Activated CD8-positive, alpha-beta T cell treated with anti-CD3 and anti-CD28 coated beads for 36 hours (primary cell): ENCODE measurements at regions of chr12 and their contacts with region 1.

Region 1: GRCh38 chr12:110937104-110937641 is 16.8 kb upstream of the MYL2 start:
- DNase-seq: peak; percentile 54
- ATAC-seq: no peak
- H3K4me3 Mint-ChIP-seq: no peak overlapping the region
- H3K27ac Mint-ChIP-seq: no peak overlapping the region
- H3K4me1 Mint-ChIP-seq: peaks cover 5% of the 10 kb centered on the region
- H3K27me3 Mint-ChIP-seq: peaks cover 11% of the 10 kb centered on the region
- CTCF ChIP-seq: peak; percentile 99

Region 2: DNA sequence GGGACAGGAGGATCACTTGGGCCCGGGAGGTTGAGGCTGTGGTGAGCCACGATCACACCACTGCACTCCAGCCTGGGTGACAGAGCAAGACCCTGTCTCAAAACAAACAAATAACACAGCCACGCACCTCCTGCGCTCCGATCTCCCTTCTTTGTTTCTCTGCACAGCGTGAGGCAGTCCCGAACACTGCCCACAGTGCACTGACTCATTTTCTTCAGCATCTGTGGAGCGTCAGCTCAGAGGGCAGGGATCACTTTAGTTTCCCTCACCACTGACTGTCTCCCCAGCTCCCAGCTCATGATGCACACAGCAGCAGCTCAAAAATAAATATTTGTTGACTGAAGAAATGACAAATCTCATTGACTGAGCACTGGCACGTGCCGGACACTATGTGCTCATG is 15.9 kb before region 1 on chr12:
- CTCF ChIA-PET with region 1: interaction called, 11 read pairs
- POLR2A ChIA-PET with region 1: no interaction called
- intact Hi-C with region 1: no loop called
- DNase-seq: no peak
- ATAC-seq: no peak
- H3K4me3 Mint-ChIP-seq: no peak overlapping the region
- H3K27ac Mint-ChIP-seq: no peak overlapping the region
- H3K4me1 Mint-ChIP-seq: no peaks in the 10 kb centered on the region
- H3K27me3 Mint-ChIP-seq: peaks cover 2% of the 10 kb centered on the region
- CTCF ChIP-seq: no peak

Region 3: GRCh38 chr12:111298582-111299436 is 361.6 kb after region 1 on chr12:
- CTCF ChIA-PET with region 1: interaction called, 18 read pairs
- POLR2A ChIA-PET with region 1: no interaction called
- intact Hi-C with region 1: loop called (anchors 10 kb)
- DNase-seq: peak; percentile 69
- ATAC-seq: peak; percentile 66
- H3K4me3 Mint-ChIP-seq: no peak overlapping the region
- H3K27ac Mint-ChIP-seq: no peak overlapping the region
- H3K4me1 Mint-ChIP-seq: no peaks in the 10 kb centered on the region
- H3K27me3 Mint-ChIP-seq: peaks cover 3% of the 10 kb centered on the region
- CTCF ChIP-seq: peak; percentile 82

Region 4: DNA sequence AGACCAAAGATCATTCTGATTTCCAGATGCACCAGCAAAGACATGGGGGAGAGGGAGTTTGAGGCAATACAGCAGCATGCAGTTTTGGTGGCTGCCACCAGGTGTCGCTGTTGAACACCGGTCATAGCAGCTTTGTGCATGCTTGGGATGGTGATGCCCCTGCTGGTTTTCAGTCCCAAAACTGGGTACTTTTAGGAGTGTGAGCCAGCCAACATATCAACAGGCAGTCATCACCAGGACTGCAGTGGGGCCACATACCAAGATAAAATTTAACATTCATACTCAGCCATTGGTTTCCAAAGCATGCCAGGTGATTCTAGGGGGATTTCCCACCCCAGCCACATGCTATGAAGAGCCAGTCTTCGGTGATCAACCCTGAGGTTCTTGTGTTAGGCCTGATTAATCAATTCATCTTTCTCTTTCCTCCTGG is 367.5 kb after region 1 on chr12:
- CTCF ChIA-PET with region 1: interaction called, 18 read pairs
- POLR2A ChIA-PET with region 1: no interaction called
- intact Hi-C with region 1: loop called (anchors 10 kb)
- DNase-seq: peak; percentile 67
- ATAC-seq: peak; percentile 34
- H3K4me3 Mint-ChIP-seq: no peak overlapping the region
- H3K27ac Mint-ChIP-seq: no peak overlapping the region
- H3K4me1 Mint-ChIP-seq: peaks cover 2% of the 10 kb centered on the region
- H3K27me3 Mint-ChIP-seq: peaks cover 1% of the 10 kb centered on the region
- CTCF ChIP-seq: peak; percentile 97